MCF 10A (cell line): ENCODE measurements at regions of chr1 and their contacts with region 1.

Region 1: DNA sequence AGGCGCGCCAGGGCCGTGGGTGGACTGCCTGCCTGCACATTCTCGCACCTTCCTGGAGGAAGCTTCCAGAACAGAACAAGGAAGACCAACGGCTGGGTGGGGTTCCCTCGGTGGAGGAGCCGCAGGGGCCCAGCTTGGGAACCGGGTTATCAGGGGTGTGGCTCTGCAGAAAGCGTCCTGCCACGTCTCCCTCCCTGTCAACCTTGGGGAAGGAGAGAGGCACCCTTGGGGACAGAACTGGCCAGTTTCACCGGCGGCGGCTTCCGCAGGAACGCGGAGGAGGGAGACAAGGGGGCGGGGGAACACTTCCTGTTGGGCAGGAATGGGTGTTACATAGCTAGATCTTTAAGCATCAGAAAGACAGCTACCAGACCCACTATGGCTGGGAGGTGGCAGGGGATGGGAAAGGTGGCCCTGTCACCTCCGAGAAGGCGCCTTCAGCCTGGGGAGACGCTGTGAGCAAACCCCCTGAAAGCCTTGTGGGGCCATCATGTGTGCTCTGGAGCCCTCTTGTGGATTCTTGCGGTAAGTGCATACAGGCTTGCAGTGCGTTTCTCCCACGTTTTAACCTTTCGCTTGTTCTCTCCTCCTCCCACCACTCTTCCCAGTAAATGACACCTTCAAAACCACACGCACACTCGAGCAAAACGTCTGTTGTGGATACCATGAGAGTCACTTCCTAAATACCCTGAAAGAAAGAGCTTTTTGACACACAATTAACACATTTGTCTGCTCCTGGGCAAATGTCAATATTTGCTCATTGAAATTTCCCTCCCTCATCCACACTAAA is 3.8 kb upstream of the PLEKHA6 start:
- DNase-seq: peak; percentile 92
- H3K4me3 Mint-ChIP-seq: peak overlapping the region; percentile 66
- H3K27ac Mint-ChIP-seq: peak overlapping the region; percentile 58
- H3K4me1 Mint-ChIP-seq: peaks cover 12% of the 10 kb centered on the region
- H3K27me3 Mint-ChIP-seq: no peaks in the 10 kb centered on the region
- CTCF ChIP-seq: peak; percentile 100

Region 2: DNA sequence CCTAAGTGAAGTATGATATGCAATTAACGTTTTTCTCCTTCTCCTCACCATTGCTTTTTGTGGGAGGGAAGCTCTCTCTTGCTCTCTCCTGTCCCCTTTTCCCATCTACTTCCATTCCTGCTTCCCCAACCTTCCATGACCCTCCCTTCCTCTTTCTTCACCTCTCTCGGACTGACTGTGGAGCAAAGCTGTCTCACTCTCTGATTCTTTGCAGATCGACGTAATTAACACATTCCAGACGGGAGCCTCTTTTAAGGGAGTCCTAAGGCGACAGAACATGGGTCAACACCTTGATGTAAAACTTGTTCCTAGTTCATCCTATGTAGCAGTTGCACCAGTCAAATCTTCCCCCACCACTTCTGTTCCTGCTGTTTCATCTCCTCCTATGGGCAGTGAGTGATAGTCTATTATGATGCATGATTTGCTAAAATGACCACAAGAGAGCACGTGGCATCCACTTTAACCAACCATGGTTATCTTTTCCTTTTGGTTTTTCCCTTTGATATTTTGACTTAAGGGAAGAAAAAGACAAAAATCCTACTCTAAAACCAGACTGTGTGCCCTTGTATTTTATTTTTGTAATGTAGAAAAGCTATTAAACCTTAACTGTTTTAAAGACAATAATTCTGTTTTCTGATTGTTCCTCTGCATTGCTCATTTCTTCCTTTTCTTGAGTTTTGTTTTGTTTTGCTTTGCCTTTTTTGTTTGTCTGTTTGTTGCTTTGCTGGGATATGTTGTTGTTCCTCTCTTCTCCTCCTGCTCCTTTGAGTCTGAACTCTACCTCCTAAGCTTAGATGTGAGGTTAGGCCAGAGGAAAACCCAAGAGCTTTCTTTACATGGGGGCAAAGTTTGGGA is 630.3 kb before region 1 on chr1:
- CTCF ChIA-PET with region 1: no interaction called
- POLR2A ChIA-PET with region 1: no interaction called
- intact Hi-C with region 1: no loop called
- DNase-seq: no peak
- H3K4me3 Mint-ChIP-seq: no peak overlapping the region
- H3K27ac Mint-ChIP-seq: no peak overlapping the region
- H3K4me1 Mint-ChIP-seq: no peaks in the 10 kb centered on the region
- H3K27me3 Mint-ChIP-seq: no peaks in the 10 kb centered on the region
- CTCF ChIP-seq: no peak

Region 3: DNA sequence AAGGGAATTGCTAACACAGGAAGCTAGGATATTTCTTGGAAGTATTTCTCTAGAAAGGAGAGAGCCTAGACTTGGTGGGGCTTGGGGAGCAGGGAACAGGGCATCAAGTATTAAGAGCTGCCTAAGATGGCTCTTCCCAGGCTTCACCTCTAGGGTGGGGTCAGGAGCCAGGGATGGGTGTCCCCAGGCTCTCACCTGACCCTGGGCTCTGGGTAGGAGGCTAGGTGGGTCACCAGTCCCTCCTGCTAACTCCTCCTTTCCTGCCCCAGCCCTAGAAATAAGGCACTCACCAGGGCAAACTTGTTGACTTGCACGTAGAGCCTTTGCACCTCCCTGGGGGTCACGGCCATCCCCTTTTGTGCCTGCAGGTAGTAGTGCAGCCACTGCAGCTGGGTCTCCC is 226.7 kb before region 1 on chr1:
- CTCF ChIA-PET with region 1: interaction called, 17 read pairs
- POLR2A ChIA-PET with region 1: no interaction called
- intact Hi-C with region 1: no loop called
- DNase-seq: no peak
- H3K4me3 Mint-ChIP-seq: no peak overlapping the region
- H3K27ac Mint-ChIP-seq: no peak overlapping the region
- H3K4me1 Mint-ChIP-seq: peaks cover 8% of the 10 kb centered on the region
- H3K27me3 Mint-ChIP-seq: no peaks in the 10 kb centered on the region
- CTCF ChIP-seq: no peak

Region 4: GRCh38 chr1:204198151-204198994 is 165.2 kb before region 1 on chr1:
- CTCF ChIA-PET with region 1: interaction called, 29 read pairs
- POLR2A ChIA-PET with region 1: no interaction called
- intact Hi-C with region 1: no loop called
- DNase-seq: peak; percentile 83
- H3K4me3 Mint-ChIP-seq: no peak overlapping the region
- H3K27ac Mint-ChIP-seq: no peak overlapping the region
- H3K4me1 Mint-ChIP-seq: peaks cover 6% of the 10 kb centered on the region
- H3K27me3 Mint-ChIP-seq: peaks cover 18% of the 10 kb centered on the region
- CTCF ChIP-seq: peak; percentile 37

Region 5: DNA sequence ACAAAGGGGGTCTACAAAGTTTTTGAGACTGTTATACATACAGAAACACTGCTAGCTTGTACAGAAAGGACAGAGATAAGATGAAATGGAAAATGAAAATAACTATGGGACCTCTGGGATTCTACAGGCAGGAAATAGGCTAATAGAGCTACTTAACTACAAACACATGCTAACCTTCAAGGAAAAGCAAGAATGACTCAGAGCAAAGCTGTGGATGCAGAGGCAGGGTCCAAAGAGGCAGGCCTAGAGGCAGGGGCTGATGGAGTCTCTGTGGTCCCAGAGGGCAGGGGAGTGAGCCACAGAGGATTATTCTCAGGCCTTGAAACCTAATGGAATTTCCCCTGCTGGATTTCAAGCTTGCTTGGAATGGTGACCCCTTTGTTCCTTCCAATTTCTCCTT is 131.0 kb before region 1 on chr1:
- CTCF ChIA-PET with region 1: interaction called, 16 read pairs
- POLR2A ChIA-PET with region 1: no interaction called
- intact Hi-C with region 1: no loop called
- DNase-seq: no peak
- H3K4me3 Mint-ChIP-seq: no peak overlapping the region
- H3K27ac Mint-ChIP-seq: no peak overlapping the region
- H3K4me1 Mint-ChIP-seq: peaks cover 3% of the 10 kb centered on the region
- H3K27me3 Mint-ChIP-seq: no peaks in the 10 kb centered on the region
- CTCF ChIP-seq: no peak

Region 6: GRCh38 chr1:204286831-204287421 is 76.6 kb before region 1 on chr1:
- CTCF ChIA-PET with region 1: interaction called, 87 read pairs
- POLR2A ChIA-PET with region 1: interaction called, 9 read pairs
- intact Hi-C with region 1: loop called (anchors 1 kb)
- DNase-seq: peak; percentile 67
- H3K4me3 Mint-ChIP-seq: peak overlapping the region; percentile 89
- H3K27ac Mint-ChIP-seq: peak overlapping the region; percentile 88
- H3K4me1 Mint-ChIP-seq: peaks cover 74% of the 10 kb centered on the region
- H3K27me3 Mint-ChIP-seq: no peaks in the 10 kb centered on the region
- CTCF ChIP-seq: peak; percentile 14

Region 7: GRCh38 chr1:204350857-204351573 is 12.5 kb before region 1 on chr1:
- CTCF ChIA-PET with region 1: interaction called, 114 read pairs
- POLR2A ChIA-PET with region 1: interaction called, 7 read pairs
- intact Hi-C with region 1: no loop called
- DNase-seq: no peak
- H3K4me3 Mint-ChIP-seq: no peak overlapping the region
- H3K27ac Mint-ChIP-seq: no peak overlapping the region
- H3K4me1 Mint-ChIP-seq: no peaks in the 10 kb centered on the region
- H3K27me3 Mint-ChIP-seq: no peaks in the 10 kb centered on the region
- CTCF ChIP-seq: no peak

Region 8: GRCh38 chr1:204506961-204507387 is 143.4 kb after region 1 on chr1:
- CTCF ChIA-PET with region 1: interaction called, 42 read pairs
- POLR2A ChIA-PET with region 1: interaction called, 3 read pairs
- intact Hi-C with region 1: loop called (anchors 1 kb)
- DNase-seq: peak; percentile 98
- H3K4me3 Mint-ChIP-seq: peak overlapping the region; percentile 77
- H3K27ac Mint-ChIP-seq: peak overlapping the region; percentile 90
- H3K4me1 Mint-ChIP-seq: peaks cover 29% of the 10 kb centered on the region
- H3K27me3 Mint-ChIP-seq: no peaks in the 10 kb centered on the region
- CTCF ChIP-seq: no peak

Region 9: GRCh38 chr1:204647114-204647804 is 283.7 kb after region 1 on chr1:
- CTCF ChIA-PET with region 1: no interaction called
- POLR2A ChIA-PET with region 1: no interaction called
- intact Hi-C with region 1: no loop called
- DNase-seq: peak; percentile 88
- H3K4me3 Mint-ChIP-seq: no peak overlapping the region
- H3K27ac Mint-ChIP-seq: no peak overlapping the region
- H3K4me1 Mint-ChIP-seq: peaks cover 8% of the 10 kb centered on the region
- H3K27me3 Mint-ChIP-seq: peaks cover 46% of the 10 kb centered on the region
- CTCF ChIP-seq: no peak